Psoas muscle (tissue), 8 donors: ENCODE measurements at regions of chr22 and their contacts with region 1.

Region 1: DNA sequence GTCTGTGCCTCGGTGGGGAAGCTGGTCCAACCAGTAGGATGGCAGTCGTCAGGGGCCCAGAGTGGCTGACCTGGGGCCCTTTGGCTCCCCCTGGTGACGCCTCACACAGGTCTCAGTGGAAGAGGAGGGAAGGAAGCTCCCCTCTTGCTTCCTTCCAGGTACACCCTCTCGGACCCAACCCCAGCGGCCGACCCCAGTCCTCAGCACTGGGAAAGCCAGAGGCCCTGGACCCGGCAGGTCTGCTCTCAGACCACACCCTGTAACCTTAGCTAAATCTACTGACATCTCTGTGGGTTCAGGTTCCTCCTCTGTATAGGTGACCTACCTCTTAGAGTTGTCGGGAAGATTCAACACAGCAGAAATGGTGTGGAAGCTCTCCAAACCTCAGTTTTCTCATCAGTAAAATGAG is 3.4 kb upstream of the SCUBE1 start:
- DNase-seq: peak; percentile 52 to 67
- ATAC-seq: peak in 3 of 4 donors; percentile 55 to 63 (median 61)
- H3K4me3 ChIP-seq: no peak overlapping the region
- H3K27ac ChIP-seq: no peak overlapping the region
- H3K4me1 ChIP-seq: no peaks in the 10 kb centered on the region
- H3K27me3 ChIP-seq: peaks cover 0 to 65% (median 29%) of the 10 kb centered on the region in 3 donors
- CTCF ChIP-seq: peak; percentile 59

Region 2: DNA sequence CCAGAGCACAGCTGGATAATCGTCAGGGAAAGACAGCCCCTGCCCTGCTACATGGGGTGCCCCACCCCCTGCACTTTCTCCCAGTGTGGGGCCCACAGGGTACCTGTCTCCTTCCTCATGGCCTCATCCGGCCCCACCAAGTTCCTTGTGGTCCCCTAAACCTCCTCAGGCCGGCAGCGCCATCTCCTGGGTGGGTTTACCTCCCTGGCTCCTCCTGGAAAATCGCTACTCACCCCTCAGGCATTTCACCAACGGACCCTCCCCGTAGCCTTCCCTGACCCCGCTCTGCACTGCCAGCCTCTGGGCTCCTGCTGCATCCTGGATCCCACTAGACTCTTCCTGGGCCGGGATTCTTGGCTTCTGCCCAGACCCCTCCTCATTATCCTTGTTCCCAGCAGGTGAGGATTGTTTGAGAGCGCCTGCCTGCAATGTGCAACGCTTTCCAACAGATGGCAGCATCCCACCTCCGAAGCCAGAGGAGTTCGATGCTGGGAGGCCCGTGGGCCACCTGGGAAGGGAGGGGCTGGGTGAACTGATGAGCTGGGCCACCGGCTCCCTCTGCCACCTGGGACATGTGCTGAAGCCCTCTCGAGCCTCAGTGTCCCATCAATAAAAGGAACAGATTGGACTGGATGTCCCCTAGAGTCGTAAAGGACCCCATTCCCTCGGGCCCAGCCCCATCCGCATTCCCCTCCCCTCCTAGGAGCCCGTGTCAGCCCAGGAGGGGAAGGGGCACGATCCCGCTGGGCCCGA is 115.4 kb before region 1 on chr22:
- intact Hi-C with region 1: loop called in 1 of 2 experiments (anchors 2 kb)
- DNase-seq: peak in 1 of 2 donors; percentile 66
- ATAC-seq: peak in 3 of 4 donors; percentile 36 to 61 (median 49)
- H3K4me3 ChIP-seq: no peak overlapping the region
- H3K27ac ChIP-seq: no peak overlapping the region
- H3K4me1 ChIP-seq: no peaks in the 10 kb centered on the region
- H3K27me3 ChIP-seq: peaks cover 0 to 16% (median 16%) of the 10 kb centered on the region in 3 donors
- CTCF ChIP-seq: peak; percentile 79

Region 3: DNA sequence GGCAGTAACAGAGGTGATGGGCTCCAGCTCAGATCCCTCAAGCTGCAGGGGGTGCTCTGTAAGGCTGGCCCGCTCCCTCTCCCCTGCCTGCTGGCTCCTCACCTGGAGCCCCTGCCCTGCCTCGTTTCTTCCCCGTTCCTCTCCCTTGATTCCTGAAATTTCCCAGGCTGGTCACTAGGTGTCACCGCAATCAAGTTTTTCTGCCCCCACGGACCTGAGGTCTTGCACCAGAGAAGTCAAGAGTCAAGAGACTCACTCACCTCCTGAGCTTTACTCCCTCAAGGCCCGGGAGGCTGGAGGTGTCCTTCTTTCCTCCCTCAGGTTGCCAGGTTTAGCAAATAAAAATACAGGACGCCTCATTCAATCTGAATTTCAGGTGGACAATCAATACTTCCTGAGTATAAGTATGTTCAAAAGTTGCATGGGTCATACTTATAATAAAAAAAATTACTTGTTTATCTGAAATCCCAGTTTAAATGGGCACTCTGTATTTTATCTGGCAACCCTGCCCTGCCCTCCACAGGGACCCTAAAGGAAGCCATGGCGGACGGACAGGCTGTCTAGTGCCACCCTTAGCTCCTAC is 72.5 kb before region 1 on chr22:
- intact Hi-C with region 1: loop called in 1 of 2 experiments (anchors 5 kb)
- DNase-seq: no peak
- ATAC-seq: peak in 3 of 4 donors; percentile 54 to 69 (median 64)
- H3K4me3 ChIP-seq: no peak overlapping the region
- H3K27ac ChIP-seq: no peak overlapping the region
- H3K4me1 ChIP-seq: no peaks in the 10 kb centered on the region
- H3K27me3 ChIP-seq: peaks cover 0 to 9% (median 0%) of the 10 kb centered on the region in 3 donors
- CTCF ChIP-seq: peak; percentile 56

Region 4: DNA sequence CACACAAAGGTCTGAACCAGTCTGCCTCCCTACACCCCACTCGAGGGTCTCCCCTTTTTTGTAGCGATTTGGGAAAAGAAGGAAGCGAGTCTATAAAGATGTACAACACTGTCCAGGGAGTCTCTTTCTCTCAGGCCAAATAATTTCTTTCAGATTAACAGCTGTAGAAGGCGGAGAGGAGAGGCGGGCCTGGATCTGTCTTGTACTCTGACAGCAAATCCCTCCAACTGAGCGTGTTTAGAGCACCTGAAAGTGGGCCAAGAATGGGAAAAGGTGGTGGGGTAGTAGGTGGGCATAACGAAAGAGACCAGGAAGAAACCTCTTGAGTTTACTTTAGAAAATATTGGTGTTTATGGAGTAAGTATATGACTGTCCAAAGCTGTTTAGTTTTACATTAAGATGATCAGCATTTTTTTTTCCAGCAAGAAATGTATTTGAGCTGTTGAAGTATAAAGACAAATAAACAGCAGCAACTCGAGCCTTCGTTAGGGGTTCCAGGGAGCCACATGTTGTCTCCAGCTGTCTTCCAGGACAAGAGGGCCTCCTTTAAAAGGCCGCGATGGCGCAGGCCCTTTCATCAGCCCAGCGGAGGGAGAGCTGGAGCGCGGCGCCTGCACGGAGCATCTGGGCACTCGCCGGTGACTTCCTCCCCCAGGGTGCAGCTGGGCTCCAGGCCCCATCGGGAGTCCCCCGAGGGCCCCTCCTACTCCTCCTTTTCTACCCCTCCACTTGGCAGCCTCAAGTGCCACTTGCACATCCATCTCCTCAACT is 38.3 kb before region 1 on chr22:
- intact Hi-C with region 1: no loop called
- DNase-seq: peak in 1 of 2 donors; percentile 49
- ATAC-seq: no peak
- H3K4me3 ChIP-seq: no peak overlapping the region
- H3K27ac ChIP-seq: no peak overlapping the region
- H3K4me1 ChIP-seq: no peaks in the 10 kb centered on the region
- H3K27me3 ChIP-seq: peaks cover 0 to 10% (median 0%) of the 10 kb centered on the region in 3 donors
- CTCF ChIP-seq: no peak